B cell (primary cell): ENCODE measurements at regions of chr10 and their contacts with region 1.

Region 1: DNA sequence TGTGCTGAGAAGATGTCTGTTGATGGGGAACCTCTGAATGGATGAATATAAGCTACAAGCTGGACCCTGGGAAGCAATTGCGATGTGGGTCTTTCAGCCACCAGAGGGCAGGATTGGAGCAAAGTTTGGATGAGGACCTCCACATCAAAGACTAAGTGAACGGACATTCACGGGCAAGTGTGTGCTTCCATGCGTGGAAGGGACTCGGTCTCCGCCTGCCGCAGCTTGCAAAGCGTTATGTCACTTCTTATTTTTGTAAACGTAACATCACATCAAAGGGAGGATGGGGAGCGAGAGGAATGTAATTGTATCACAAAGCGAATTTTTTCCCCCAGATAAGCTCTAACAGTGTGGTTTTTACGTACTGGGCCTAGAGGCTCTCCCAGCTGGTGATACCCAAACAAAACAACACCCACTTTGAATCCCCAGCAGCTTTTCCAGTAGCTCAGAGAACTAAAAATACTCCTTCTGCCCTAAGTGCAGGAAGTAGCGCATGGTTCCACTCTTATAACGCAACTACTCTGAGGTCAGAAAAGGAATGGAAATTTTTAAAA is 65.0 kb downstream of the VWA2 start:
- DNase-seq: peak; percentile 79
- ATAC-seq: peak; percentile 55
- H3K4me3 ChIP-seq: peak overlapping the region; percentile 65 to 86 (median 76)
- H3K4me3 Mint-ChIP-seq: peak overlapping the region; percentile 91
- H3K27ac ChIP-seq: peak overlapping the region; percentile 5 to 53
- H3K27ac Mint-ChIP-seq: peak overlapping the region; percentile 75
- H3K4me1 ChIP-seq: peaks cover 0 to 10% of the 10 kb centered on the region in 2 donors
- H3K4me1 Mint-ChIP-seq: peaks cover 13% of the 10 kb centered on the region
- H3K27me3 ChIP-seq: no peaks in the 10 kb centered on the region
- H3K27me3 Mint-ChIP-seq: no peaks in the 10 kb centered on the region
- CTCF ChIP-seq: peak; percentile 80

Region 2: DNA sequence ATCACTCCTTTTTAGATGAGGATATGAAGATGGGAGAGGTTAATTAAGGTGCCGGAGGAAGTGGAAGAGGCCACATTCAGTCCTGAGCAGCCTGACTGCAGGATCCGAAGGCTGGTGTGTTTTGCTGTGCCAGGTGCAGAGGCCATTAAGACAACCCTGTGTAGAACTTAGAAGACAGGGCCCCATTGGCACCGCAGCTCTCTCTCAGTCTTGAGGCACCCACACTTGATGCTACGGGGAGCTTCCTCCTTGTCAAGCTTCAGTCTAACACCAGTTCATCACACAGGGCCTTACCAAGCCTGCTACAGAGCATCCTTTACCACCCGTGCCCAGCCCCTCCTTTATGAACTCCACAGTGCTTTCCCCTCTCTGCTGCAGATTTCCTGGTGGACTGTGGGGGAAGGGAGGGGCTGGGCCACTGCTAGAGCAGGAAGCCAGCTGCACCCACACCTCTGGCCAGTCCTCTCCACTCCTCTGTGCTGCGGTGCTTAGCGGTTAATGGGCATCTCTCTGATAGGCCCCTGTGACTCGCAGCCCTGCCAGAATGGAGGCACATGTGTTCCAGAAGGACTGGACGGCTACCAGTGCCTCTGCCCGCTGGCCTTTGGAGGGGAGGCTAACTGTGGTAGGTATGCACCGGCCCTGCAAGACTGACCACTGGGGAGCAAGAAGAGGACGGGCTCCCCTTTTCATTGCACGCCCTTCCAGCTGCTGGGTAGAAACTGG is 19.6 kb before region 1 on chr10:
- CTCF ChIA-PET with region 1: interaction called, 10 read pairs
- POLR2A ChIA-PET with region 1: no interaction called
- intact Hi-C with region 1: no loop called
- DNase-seq: no peak
- ATAC-seq: no peak
- H3K4me3 ChIP-seq: no peak overlapping the region
- H3K4me3 Mint-ChIP-seq: no peak overlapping the region
- H3K27ac ChIP-seq: no peak overlapping the region
- H3K27ac Mint-ChIP-seq: no peak overlapping the region
- H3K4me1 ChIP-seq: no peaks in the 10 kb centered on the region
- H3K4me1 Mint-ChIP-seq: no peaks in the 10 kb centered on the region
- H3K27me3 ChIP-seq: no peaks in the 10 kb centered on the region
- H3K27me3 Mint-ChIP-seq: no peaks in the 10 kb centered on the region
- CTCF ChIP-seq: no peak

Region 3: DNA sequence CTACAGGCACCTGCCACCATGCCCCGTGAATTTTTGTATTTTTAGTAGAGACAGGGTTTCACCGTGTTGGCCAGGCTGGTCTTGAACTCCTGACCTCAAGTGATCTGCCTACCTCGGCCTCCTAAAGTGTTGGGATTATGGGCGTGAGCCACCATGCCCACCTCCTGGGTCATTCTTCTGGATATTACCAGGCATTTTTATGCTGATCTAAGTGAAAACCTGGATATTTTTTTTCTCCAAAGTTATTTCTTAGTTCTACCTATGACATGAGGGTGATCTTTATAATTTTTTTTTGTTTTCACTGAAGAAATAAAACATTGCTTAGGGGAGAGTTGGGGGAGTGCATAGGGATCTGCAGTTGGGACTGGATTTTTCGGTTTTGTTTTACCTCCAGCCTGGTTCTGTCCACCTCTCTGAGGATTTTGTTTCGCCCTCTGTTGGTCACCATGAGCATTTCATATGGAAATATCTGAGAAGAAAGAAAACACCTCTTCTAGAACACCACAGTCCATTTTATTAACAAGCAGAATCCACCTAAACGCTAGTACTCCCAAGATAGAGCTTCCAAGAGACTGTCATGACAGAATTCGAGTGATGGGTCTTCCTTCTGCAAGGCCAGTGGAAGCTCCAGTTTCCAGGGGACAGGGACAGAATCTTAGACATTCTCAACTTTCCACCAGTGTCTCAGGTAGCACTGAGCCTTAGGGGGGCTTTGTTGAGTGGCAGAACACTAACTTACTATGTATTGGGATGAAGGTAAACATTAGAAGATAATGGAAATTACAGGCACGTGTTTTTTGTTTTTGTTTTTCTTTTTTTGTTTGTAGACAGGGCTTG is 133.6 kb after region 1 on chr10:
- CTCF ChIA-PET with region 1: interaction called, 4 read pairs
- POLR2A ChIA-PET with region 1: no interaction called
- intact Hi-C with region 1: loop called (anchors 10 kb)
- DNase-seq: no peak
- ATAC-seq: no peak
- H3K4me3 ChIP-seq: no peak overlapping the region
- H3K4me3 Mint-ChIP-seq: no peak overlapping the region
- H3K27ac ChIP-seq: no peak overlapping the region
- H3K27ac Mint-ChIP-seq: no peak overlapping the region
- H3K4me1 ChIP-seq: no peaks in the 10 kb centered on the region
- H3K4me1 Mint-ChIP-seq: no peaks in the 10 kb centered on the region
- H3K27me3 ChIP-seq: no peaks in the 10 kb centered on the region
- H3K27me3 Mint-ChIP-seq: no peaks in the 10 kb centered on the region
- CTCF ChIP-seq: no peak

Region 4: GRCh38 chr10:114694752-114695151 is 390.7 kb after region 1 on chr10:
- CTCF ChIA-PET with region 1: interaction called, 8 read pairs
- POLR2A ChIA-PET with region 1: no interaction called
- intact Hi-C with region 1: loop called (anchors 2 kb)
- DNase-seq: peak; percentile 42
- ATAC-seq: no peak
- H3K4me3 ChIP-seq: no peak overlapping the region
- H3K4me3 Mint-ChIP-seq: no peak overlapping the region
- H3K27ac ChIP-seq: no peak overlapping the region
- H3K27ac Mint-ChIP-seq: no peak overlapping the region
- H3K4me1 ChIP-seq: no peaks in the 10 kb centered on the region
- H3K4me1 Mint-ChIP-seq: no peaks in the 10 kb centered on the region
- H3K27me3 ChIP-seq: peaks cover 0 to 5% (median 4%) of the 10 kb centered on the region in 4 experiments
- H3K27me3 Mint-ChIP-seq: peaks cover 10% of the 10 kb centered on the region
- CTCF ChIP-seq: peak; percentile 60

Region 5: GRCh38 chr10:114795039-114795438 is 490.9 kb after region 1 on chr10:
- CTCF ChIA-PET with region 1: interaction called, 20 read pairs
- POLR2A ChIA-PET with region 1: no interaction called
- intact Hi-C with region 1: no loop called
- DNase-seq: no peak
- ATAC-seq: no peak
- H3K4me3 ChIP-seq: no peak overlapping the region
- H3K4me3 Mint-ChIP-seq: no peak overlapping the region
- H3K27ac ChIP-seq: no peak overlapping the region
- H3K27ac Mint-ChIP-seq: no peak overlapping the region
- H3K4me1 ChIP-seq: no peaks in the 10 kb centered on the region
- H3K4me1 Mint-ChIP-seq: no peaks in the 10 kb centered on the region
- H3K27me3 ChIP-seq: no peaks in the 10 kb centered on the region
- H3K27me3 Mint-ChIP-seq: no peaks in the 10 kb centered on the region
- CTCF ChIP-seq: no peak